HAP-1 (cell line): ENCODE measurements at regions of chr2 and their contacts with region 1.

Region 1: DNA sequence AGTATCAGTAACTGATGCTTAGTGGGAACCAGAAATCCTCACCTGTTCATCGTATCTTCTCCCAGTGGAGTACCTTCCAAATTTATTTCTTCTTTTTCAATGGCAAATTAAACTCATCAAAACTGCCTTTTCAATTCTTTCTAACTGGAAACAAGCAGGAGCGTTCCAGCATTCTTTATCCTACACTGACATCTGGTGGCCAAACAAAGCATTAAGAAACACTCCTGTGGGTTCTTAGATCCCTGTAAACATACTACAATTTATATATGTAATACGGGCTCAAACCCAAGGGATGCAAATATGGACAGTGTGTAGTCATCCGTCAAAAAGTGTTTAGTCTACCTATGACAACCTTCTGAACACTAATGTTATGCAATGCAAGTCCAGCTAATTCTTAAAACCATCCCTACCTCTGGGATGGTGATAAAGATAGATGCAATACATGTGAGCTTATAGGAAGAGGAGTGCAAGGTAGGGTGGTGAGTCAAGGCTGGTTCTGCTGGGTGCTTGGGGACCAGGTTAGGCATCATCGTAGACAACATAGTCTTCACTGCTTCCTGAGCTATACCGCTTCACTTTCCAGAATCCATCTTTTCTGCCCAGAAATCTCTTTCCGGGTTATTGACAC is 375.0 kb downstream of the CTNNA2 start:
- DNase-seq: peak; percentile 38 to 49
- H3K4me3 ChIP-seq: no peak overlapping the region
- H3K4me1 ChIP-seq: no peaks in the 10 kb centered on the region
- H3K27me3 ChIP-seq: no peaks in the 10 kb centered on the region

Region 2: GRCh38 chr2:78979380-78980151 is 908.3 kb before region 1 on chr2:
- in situ Hi-C with region 1: loop called (anchors 25 kb)
- DNase-seq: peak; percentile 40 to 73
- H3K4me3 ChIP-seq: no peak overlapping the region
- H3K4me1 ChIP-seq: no peaks in the 10 kb centered on the region
- H3K27me3 ChIP-seq: no peaks in the 10 kb centered on the region